Activated CD4-positive, alpha-beta T cell treated with anti-CD3 and anti-CD28 coated beads for 36 hours (primary cell): ENCODE measurements at regions of chr1 and their contacts with region 1.

Region 1: GRCh38 chr1:26417111-26417759 is 6.6 kb downstream of the LIN28A start:
- DNase-seq: peak; percentile 93
- ATAC-seq: peak; percentile 100
- H3K4me3 Mint-ChIP-seq: no peak overlapping the region
- H3K27ac Mint-ChIP-seq: no peak overlapping the region
- H3K4me1 Mint-ChIP-seq: no peaks in the 10 kb centered on the region
- H3K27me3 Mint-ChIP-seq: peaks cover 19% of the 10 kb centered on the region

Region 2: GRCh38 chr1:26102526-26102925 is 314.7 kb before region 1 on chr1:
- CTCF ChIA-PET with region 1: interaction called, 5 read pairs
- POLR2A ChIA-PET with region 1: interaction called, 3 read pairs
- intact Hi-C with region 1: loop called (anchors 2 to 10 kb)
- DNase-seq: no peak
- ATAC-seq: no peak
- H3K4me3 Mint-ChIP-seq: no peak overlapping the region
- H3K27ac Mint-ChIP-seq: no peak overlapping the region
- H3K4me1 Mint-ChIP-seq: peaks cover 7% of the 10 kb centered on the region
- H3K27me3 Mint-ChIP-seq: no peaks in the 10 kb centered on the region

Region 3: DNA sequence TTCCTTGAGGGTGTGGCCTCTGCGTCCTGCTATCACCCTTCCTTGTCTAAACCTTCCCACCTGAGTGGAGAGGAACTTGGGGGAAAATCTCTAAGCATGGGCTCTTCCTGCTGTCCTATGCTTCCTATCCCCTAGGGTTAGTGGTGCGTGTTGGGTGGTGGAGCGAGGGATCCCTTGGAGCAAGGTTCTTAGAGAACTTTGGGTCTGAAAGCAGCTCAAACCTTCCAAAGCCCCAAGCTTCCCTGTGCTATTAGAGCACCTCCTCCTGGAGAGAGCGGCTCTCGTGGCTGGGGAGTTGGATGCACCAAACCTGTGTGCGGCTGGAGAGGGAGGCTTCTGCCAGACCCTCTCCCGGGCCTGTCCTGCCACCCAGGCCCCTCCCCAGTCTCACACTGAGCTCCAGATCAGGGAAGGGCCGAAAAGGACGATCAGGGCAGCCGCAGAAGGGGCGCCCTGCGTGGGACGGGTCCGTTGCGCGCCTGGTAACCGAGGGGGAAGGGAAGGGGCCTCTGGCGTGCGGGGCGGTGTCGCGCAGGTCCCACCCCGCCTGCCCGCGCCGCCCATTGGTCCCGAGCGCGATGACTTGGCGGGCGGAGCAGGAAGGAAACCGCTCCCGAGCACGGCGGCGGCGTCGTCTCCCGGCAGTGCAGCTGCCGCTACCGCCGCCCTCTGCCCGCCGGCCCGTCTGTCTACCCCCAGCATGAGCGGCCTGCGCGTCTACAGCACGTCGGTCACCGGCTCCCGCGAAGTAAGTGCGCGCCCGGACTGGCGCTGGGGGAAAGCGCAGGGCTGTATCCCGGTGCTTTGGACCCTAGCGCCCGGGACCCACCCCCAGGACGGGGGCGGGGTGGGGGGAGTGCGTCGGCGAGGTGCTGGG is 137.5 kb before region 1 on chr1 and contains the start of gene SH3BGRL3:
- CTCF ChIA-PET with region 1: interaction called, 17 read pairs
- POLR2A ChIA-PET with region 1: no interaction called
- intact Hi-C with region 1: loop called (anchors 1 to 2 kb)
- DNase-seq: peak; percentile 92
- ATAC-seq: peak; percentile 56
- H3K4me3 Mint-ChIP-seq: peak within 1 kb of the TSS; percentile 78
- H3K27ac Mint-ChIP-seq: peak within 1 kb of the TSS; percentile 94
- H3K4me1 Mint-ChIP-seq: peaks cover 82% of the 10 kb centered on the region
- H3K27me3 Mint-ChIP-seq: no peaks in the 10 kb centered on the region
- total RNA-seq, gene SH3BGRL3: 267 to 381 TPM

Region 4: DNA sequence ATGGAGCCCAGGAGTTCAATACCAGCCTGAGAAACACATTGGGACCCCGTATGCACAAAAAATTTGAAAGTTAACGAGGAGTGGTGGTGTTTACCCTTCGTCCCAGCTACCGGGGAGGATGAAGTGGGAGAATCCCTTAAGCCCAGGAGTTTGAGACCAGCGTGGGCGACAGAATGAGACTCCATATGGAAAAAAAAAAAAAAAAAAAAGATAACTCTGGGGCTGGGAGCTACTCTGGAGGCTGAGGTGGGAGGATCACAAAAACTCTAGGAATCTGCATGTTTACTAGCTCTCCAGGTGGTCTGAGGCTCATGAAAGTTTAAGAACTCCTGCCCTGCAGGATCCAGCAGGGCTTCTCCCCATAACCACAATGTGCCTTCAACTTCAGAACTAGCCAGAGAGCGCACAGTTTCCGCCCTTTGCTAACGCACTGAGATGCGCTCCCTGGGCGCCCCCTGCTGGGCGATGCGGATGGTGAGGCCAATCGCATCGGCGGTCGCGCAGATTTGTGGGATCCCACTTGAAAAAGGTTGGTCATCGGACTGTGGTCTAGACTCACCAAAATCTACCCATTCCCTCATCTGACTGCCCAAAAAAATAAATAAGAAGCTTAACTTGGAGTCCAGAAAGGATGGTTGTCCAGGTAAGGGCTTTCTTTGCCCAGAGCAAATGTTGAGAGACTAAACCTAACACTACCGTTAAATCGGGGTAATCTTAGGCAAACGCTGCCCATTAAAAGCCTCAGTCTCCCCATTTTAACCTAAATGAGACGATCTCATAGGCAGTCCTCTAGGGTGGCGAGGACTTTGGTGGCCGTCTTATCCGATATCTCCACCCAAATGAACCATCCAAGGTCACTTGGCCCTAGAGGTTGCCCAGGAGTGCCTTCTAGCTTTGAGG is 53.4 kb before region 1 on chr1:
- CTCF ChIA-PET with region 1: interaction called, 13 read pairs
- POLR2A ChIA-PET with region 1: interaction called, 3 read pairs
- intact Hi-C with region 1: loop called in 1 of 2 experiments (anchors 2 kb)
- DNase-seq: peak; percentile 92
- ATAC-seq: peak; percentile 77
- H3K4me3 Mint-ChIP-seq: no peak overlapping the region
- H3K27ac Mint-ChIP-seq: no peak overlapping the region
- H3K4me1 Mint-ChIP-seq: peaks cover 28% of the 10 kb centered on the region
- H3K27me3 Mint-ChIP-seq: peaks cover 11% of the 10 kb centered on the region

Region 5: DNA sequence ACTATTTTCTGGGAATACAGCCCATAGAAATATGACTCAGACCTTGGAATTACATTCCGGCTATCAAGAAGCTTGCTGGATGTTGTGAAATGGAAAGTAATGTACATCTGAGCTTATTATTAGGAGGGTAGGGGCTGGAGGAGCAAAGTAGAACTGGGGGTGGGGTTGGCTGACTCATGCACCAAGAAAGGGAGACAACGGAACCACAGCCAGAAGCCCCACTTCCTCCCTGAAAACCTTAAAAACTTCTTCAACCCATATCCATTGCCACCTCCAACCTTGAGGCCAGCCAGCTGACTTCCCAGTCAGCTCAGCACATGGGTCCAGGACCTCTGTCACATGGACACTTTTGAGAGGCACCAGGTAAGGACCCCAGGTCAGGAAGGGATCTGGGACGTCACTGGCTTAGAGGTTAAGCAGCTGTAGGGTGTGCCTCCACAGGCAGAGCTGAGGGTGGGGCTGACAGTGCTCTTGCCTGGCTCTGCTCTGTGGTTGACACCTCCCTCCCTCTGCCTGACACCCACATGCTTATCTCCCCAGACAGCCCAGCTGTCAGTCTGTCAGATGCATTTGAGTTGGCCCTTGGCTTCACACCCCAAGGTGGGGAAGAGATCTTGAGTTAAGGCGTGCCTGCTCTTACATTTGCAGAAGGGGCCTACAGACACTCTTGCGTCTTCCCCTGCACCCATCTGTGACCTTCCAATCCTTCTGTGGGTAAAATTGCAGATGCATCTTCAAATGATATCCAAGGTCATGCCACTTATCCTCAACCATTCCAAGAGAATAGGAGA is 39.0 kb before region 1 on chr1:
- CTCF ChIA-PET with region 1: interaction called, 13 read pairs
- POLR2A ChIA-PET with region 1: no interaction called
- intact Hi-C with region 1: loop called in 1 of 2 experiments (anchors 5 kb)
- DNase-seq: peak; percentile 80
- ATAC-seq: peak; percentile 95
- H3K4me3 Mint-ChIP-seq: peak overlapping the region; percentile 36
- H3K27ac Mint-ChIP-seq: peak overlapping the region; percentile 47
- H3K4me1 Mint-ChIP-seq: peaks cover 61% of the 10 kb centered on the region
- H3K27me3 Mint-ChIP-seq: no peaks in the 10 kb centered on the region

Region 6: DNA sequence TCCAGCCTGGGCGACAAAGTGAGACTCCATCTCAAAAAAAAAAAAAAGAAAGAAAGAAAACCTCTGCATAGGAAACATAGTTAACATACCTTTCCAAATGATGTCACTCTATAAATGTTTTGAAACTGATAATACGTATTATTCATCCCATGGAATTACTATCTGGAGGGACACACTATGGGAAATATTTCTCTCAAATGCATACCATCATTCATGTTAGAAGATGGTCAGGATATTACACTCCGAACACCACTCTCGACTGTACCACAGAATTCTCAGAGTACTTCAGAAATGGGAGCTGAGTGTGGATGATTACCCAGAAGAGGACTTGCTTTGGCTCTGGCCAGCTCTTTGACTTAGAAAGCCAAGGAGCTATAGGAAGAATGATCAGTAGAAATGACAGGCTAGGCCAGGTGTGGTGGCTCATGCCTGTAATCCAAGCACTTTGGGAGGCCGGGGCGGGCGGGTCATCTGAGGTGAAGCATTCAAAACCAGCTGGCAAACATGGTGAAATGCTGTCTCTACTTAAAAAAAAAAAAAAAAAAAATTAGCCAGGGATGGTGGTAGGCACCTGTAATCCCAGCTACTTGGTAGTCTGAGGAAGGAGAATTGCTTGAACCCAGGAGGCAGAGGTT is 11.8 kb before region 1 on chr1:
- CTCF ChIA-PET with region 1: interaction called, 40 read pairs
- POLR2A ChIA-PET with region 1: no interaction called
- intact Hi-C with region 1: no loop called
- DNase-seq: no peak
- ATAC-seq: no peak
- H3K4me3 Mint-ChIP-seq: no peak overlapping the region
- H3K27ac Mint-ChIP-seq: no peak overlapping the region
- H3K4me1 Mint-ChIP-seq: peaks cover 16% of the 10 kb centered on the region
- H3K27me3 Mint-ChIP-seq: peaks cover 24% of the 10 kb centered on the region

Region 7: DNA sequence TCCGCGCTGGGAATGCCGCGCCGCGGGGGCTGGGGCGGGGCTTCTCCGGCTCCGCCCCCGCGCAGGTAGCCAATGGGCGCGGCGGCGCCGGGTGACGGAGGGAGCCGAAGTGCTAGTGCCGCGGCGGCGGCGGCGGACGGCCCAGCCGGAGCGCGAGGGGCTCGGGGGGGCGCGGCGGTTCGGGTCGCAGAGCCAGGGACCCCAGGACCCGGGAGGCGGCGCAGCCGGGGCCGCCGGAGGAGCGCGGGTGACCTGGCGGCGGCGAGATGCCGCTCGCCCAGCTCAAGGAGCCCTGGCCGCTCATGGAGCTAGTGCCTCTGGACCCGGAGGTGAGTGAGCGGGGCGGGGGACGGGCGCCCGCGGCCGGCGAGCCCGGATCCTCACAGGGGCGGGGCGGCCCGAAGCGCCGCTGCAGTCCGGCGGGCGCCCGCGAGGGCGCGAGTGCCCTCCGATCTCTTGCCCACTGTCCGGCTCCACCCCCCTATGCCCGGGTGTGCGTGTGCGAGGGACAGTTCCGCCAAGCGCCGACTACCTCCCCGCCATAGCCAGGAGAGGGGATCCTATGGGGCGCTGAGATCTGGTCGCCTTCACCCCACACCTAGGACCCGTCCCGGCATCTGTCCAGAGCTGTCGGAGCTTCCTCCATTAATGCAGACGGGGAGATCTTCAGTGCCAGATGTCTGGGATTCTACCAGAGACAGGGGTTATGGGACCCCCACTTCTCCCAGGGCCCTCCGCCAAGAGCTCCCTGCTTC is 112.6 kb after region 1 on chr1 and contains the start of gene RPS6KA1:
- CTCF ChIA-PET with region 1: no interaction called
- POLR2A ChIA-PET with region 1: no interaction called
- intact Hi-C with region 1: no loop called
- DNase-seq: peak; percentile 78
- ATAC-seq: peak; percentile 88
- H3K4me3 Mint-ChIP-seq: peak within 1 kb of the TSS; percentile 81
- H3K27ac Mint-ChIP-seq: peak within 1 kb of the TSS; percentile 87
- H3K4me1 Mint-ChIP-seq: peaks cover 21% of the 10 kb centered on the region
- H3K27me3 Mint-ChIP-seq: no peaks in the 10 kb centered on the region
- total RNA-seq, gene RPS6KA1: 116 to 160 TPM